Activated CD8-positive, alpha-beta T cell treated with anti-CD3 and anti-CD28 coated beads for 36 hours (primary cell): ENCODE measurements at regions of chr19 and their contacts with region 1.

Region 1: DNA sequence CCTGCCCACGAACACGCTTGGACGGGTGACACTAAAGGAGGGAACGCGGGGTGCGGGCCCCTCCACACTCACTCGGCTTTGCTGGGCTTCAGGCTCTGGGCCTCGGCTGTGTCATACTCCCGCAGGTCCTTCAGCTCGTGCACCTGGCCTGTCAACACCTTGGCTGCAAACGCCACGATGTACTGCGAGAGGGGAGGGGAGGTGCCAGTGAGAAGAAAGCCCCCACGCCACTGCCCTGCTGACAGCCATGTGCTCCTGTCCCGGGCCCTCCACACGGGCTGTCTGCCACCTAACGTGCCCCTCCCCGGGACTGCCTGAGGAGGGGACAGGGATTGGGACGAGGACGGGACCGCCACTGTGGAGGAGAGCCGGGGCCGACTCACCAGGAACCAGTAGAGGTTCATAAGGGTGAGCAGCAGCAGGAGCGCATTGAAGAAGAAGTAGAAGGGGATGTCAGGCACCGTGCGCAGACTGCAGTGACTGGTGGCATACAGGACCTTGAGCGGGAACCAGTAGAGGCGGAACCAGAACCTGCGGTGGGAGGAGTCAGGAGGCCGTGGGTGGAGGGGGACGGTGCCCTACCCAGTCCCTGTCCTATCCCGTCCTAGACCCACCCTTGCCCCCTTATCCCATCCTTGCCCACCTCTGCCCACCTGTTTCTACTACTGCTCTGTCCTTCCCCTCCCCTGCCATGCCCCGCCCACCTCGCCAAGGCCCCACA is 16.9 kb downstream of the CERS1 start:
- DNase-seq: no peak
- ATAC-seq: peak; percentile 6
- H3K4me3 Mint-ChIP-seq: no peak overlapping the region
- H3K27ac Mint-ChIP-seq: no peak overlapping the region
- H3K4me1 Mint-ChIP-seq: no peaks in the 10 kb centered on the region
- H3K27me3 Mint-ChIP-seq: no peaks in the 10 kb centered on the region
- CTCF ChIP-seq: no peak

Region 2: GRCh38 chr19:18865973-18866799 is 12.8 kb before region 1 on chr19:
- CTCF ChIA-PET with region 1: interaction called, 14 read pairs
- POLR2A ChIA-PET with region 1: no interaction called
- intact Hi-C with region 1: no loop called
- DNase-seq: peak; percentile 74
- ATAC-seq: peak; percentile 86
- H3K4me3 Mint-ChIP-seq: no peak overlapping the region
- H3K27ac Mint-ChIP-seq: no peak overlapping the region
- H3K4me1 Mint-ChIP-seq: peaks cover 3% of the 10 kb centered on the region
- H3K27me3 Mint-ChIP-seq: no peaks in the 10 kb centered on the region
- CTCF ChIP-seq: peak; percentile 100